Activated CD4-positive, alpha-beta T cell treated with anti-CD3 and anti-CD28 coated beads for 36 hours (primary cell): ENCODE measurements at regions of chr6 and their contacts with region 1.

Region 1: DNA sequence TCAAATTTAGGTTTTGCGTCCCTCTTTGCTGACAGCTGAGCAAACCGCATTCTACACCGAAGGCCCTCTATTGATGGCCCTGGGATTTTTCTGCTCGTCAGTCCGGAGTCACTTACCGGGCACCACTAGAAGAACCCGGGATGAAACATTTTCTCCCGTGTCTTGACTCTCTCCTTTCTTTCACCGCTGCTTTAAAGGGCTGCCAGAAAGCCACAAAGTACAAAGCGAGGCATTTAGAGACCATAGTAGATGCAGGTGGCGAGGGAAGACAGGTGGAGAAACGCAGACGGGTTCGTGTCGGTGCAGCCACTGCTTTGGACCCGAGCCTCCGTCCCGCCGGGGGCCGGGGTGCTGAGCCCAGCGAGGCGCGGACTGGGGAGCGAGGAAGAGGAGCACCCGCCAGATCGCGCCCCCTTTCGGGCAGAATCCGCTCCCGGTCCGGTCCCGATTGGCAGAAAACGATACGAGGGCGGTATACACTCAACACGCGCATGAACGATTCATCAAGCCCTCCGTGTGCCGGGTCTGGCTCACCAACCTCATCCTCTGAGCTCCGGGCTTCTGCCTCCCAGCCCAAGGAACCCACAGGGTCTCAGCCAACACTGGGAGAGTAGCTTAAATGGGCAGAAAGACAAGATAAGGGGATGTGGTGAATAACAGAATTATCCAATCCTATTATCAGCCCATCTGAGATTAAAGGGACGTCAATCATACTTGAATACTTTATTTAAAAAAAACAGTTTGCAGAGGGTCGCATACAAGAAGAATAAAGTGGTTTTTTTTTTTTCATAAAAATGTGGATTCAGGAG is 84.9 kb downstream of the TRIM27 start:
- DNase-seq: peak; percentile 94
- ATAC-seq: peak; percentile 87
- H3K4me3 Mint-ChIP-seq: peak overlapping the region; percentile 83
- H3K27ac Mint-ChIP-seq: peak overlapping the region; percentile 75
- H3K4me1 Mint-ChIP-seq: peaks cover 15% of the 10 kb centered on the region
- H3K27me3 Mint-ChIP-seq: peaks cover 17% of the 10 kb centered on the region

Region 2: DNA sequence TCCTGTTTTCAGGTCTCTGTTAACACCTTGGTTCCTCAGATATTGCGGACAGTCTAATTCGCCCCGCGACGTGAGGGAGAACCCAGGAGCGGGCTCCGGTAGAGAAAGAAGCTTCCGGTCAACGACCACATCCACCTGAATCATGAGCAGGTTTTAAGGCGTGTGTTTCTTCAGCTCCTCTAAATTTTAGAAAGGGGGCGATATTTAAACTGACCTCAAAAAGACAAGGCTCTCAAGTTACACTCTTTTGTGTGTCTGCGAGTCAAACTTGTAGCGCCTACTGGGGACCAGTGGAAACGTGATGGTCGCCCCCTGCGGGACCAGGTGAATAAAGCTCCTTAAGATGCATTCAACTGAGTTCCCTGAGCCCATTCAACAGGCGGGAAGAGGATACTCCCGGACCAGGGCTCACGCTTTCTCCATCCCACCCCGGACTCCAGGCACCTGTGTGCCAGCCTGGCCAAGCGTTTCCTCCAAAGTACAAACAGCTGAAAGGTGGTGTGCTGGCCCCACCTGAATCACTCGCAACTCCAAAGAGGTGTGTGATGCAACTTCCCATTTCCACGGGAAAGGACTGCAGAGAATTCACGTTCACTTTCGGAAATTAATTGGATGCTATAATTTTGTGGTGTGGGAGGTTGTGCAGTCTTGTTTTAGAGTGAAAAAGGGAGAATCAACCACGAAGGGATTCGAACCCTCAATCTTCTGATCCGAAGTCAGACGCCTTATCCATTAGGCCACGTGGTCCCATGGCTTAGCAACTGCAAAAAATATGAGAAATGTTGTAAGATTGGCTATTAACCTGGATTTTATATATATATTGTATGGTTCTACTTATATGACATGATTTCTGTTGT is 296.2 kb before region 1 on chr6:
- CTCF ChIA-PET with region 1: no interaction called
- POLR2A ChIA-PET with region 1: no interaction called
- intact Hi-C with region 1: loop called in 1 of 2 experiments (anchors 2 kb)
- DNase-seq: peak; percentile 80
- ATAC-seq: peak; percentile 62
- H3K4me3 Mint-ChIP-seq: peak overlapping the region; percentile 72
- H3K27ac Mint-ChIP-seq: peak overlapping the region; percentile 75
- H3K4me1 Mint-ChIP-seq: peaks cover 36% of the 10 kb centered on the region
- H3K27me3 Mint-ChIP-seq: peaks cover 38% of the 10 kb centered on the region

Region 3: GRCh38 chr6:28801111-28801510 is 37.7 kb before region 1 on chr6:
- CTCF ChIA-PET with region 1: no interaction called
- POLR2A ChIA-PET with region 1: no interaction called
- intact Hi-C with region 1: no loop called
- DNase-seq: no peak
- ATAC-seq: no peak
- H3K4me3 Mint-ChIP-seq: no peak overlapping the region
- H3K27ac Mint-ChIP-seq: no peak overlapping the region
- H3K4me1 Mint-ChIP-seq: no peaks in the 10 kb centered on the region
- H3K27me3 Mint-ChIP-seq: peaks cover 68% of the 10 kb centered on the region

Region 4: GRCh38 chr6:28824793-28825731 is 13.8 kb before region 1 on chr6:
- CTCF ChIA-PET with region 1: interaction called, 10 read pairs
- POLR2A ChIA-PET with region 1: no interaction called
- intact Hi-C with region 1: no loop called
- DNase-seq: no peak
- ATAC-seq: no peak
- H3K4me3 Mint-ChIP-seq: peak overlapping the region; percentile 9
- H3K27ac Mint-ChIP-seq: no peak overlapping the region
- H3K4me1 Mint-ChIP-seq: peaks cover 12% of the 10 kb centered on the region
- H3K27me3 Mint-ChIP-seq: peaks cover 64% of the 10 kb centered on the region

Region 5: DNA sequence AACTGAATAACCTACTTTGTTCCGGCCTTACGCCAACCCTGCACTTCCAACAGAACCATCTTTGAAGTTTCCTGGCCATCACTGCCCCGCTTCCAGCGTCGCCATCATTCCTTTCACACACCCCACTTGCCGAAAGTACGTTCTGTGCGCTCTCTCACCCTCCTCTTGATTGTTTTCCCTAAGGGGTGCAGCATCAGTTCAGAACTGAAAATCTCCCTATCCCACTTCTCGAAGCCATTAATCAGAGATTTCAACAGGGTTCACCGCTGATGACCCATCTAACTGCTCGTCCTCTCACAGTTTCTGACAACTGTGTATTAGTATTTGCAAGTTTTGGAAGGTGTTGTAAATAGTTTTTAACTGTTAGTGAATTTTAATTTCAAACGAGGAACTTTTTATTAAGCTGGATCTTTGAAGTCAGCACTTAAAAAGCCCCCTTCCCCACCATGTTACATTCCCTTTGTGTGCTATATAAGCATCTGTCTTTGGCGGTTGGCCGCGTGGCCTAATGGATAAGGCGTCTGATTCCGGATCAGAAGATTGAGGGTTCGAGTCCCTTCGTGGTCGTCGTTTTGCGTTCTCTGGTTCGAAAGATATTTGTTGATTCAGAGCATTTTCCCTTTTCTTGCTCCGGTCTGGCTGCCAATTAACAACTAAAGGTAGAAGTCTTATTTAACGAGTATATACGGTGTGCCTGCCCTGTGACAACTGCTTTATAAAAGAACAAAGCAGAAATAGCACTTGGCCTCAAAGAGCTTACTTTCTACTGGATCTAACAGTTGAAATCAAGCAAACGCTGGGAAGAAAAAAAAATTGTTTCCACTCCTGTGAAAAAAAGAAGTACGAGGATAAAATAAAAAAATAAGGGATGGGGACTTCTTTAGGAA is 42.3 kb after region 1 on chr6:
- CTCF ChIA-PET with region 1: interaction called, 20 read pairs
- POLR2A ChIA-PET with region 1: interaction called, 8 read pairs
- intact Hi-C with region 1: loop called in 1 of 2 experiments (anchors 2 kb)
- DNase-seq: peak; percentile 79
- ATAC-seq: no peak
- H3K4me3 Mint-ChIP-seq: peak overlapping the region; percentile 57
- H3K27ac Mint-ChIP-seq: peak overlapping the region; percentile 69
- H3K4me1 Mint-ChIP-seq: peaks cover 29% of the 10 kb centered on the region
- H3K27me3 Mint-ChIP-seq: peaks cover 3% of the 10 kb centered on the region

Region 6: DNA sequence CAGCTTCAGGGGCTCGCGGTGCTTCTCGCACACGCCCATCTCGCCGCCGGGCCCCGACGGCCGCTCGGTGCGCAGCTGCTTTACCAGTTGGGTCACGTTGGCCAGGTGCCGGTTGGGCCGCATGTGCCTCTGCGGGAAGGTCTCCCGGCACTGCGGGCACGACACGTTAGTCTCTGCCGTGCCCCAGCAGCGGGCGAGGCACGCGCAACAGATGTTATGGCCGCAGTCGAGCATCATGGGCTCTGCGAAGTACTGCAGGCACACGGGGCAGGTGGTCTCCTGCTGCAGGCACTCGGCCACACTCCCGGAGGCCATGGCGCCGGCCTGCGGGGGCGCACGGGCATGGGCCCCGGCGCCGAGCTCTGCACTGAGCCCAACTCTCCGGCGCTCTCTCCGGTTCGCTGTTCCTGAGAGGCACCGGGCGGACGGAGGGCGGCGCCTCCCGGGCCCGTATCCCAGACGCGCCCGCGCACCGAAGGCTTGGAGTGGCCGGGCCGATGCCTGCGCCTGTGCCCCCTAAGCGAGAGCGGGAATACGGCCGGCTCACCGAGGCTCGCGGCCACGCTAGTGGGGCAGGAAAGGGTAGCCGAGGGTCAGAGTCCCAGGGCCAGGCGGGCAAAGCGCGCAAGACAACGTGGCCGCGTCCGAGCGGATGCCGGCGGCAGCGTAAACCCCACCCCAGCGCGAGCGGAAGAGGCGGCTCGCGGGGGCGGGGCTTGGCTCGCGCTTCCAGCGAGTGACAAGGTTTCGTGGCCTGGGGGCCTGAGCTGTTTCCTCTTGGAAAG is 84.7 kb after region 1 on chr6 and contains the start of gene TRIM27:
- CTCF ChIA-PET with region 1: interaction called, 28 read pairs
- POLR2A ChIA-PET with region 1: interaction called, 7 read pairs
- intact Hi-C with region 1: loop called in 1 of 2 experiments (anchors 1 kb)
- DNase-seq: peak; percentile 88
- ATAC-seq: peak; percentile 81
- H3K4me3 Mint-ChIP-seq: peak within 1 kb of the TSS; percentile 96
- H3K27ac Mint-ChIP-seq: peak within 1 kb of the TSS; percentile 88
- H3K4me1 Mint-ChIP-seq: peaks cover 36% of the 10 kb centered on the region
- H3K27me3 Mint-ChIP-seq: no peaks in the 10 kb centered on the region
- total RNA-seq, gene TRIM27: 48.5 to 54.6 TPM

Region 7: GRCh38 chr6:28988536-28989311 is 149.9 kb after region 1 on chr6:
- CTCF ChIA-PET with region 1: interaction called, 8 read pairs
- POLR2A ChIA-PET with region 1: no interaction called
- intact Hi-C with region 1: loop called (anchors 1 kb)
- DNase-seq: peak; percentile 86
- ATAC-seq: peak; percentile 82
- H3K4me3 Mint-ChIP-seq: peak overlapping the region; percentile 83
- H3K27ac Mint-ChIP-seq: peak overlapping the region; percentile 69
- H3K4me1 Mint-ChIP-seq: peaks cover 24% of the 10 kb centered on the region
- H3K27me3 Mint-ChIP-seq: peaks cover 18% of the 10 kb centered on the region

Region 8: GRCh38 chr6:29589423-29590048 is 750.7 kb after region 1 on chr6:
- CTCF ChIA-PET with region 1: no interaction called
- POLR2A ChIA-PET with region 1: no interaction called
- intact Hi-C with region 1: loop called in 1 of 2 experiments (anchors 10 kb)
- DNase-seq: peak; percentile 69
- ATAC-seq: peak; percentile 71
- H3K4me3 Mint-ChIP-seq: no peak overlapping the region
- H3K27ac Mint-ChIP-seq: no peak overlapping the region
- H3K4me1 Mint-ChIP-seq: no peaks in the 10 kb centered on the region
- H3K27me3 Mint-ChIP-seq: peaks cover 2% of the 10 kb centered on the region